Endothelial cell of umbilical vein (primary cell): ENCODE measurements at regions of chr1 and their contacts with region 1.

Region 1: GRCh38 chr1:43358746-43359693 is at the start of gene CDC20:
- DNase-seq: peak; percentile 98
- H3K4me3 ChIP-seq: peak within 1 kb of the TSS; percentile 57 to 84 (median 80)
- H3K27ac ChIP-seq: peak within 1 kb of the TSS; percentile 80
- H3K4me1 ChIP-seq: peaks cover 38% of the 10 kb centered on the region
- H3K27me3 ChIP-seq: no peaks in the 10 kb centered on the region
- CTCF ChIP-seq: no peak
- POLR2A ChIP-seq: no peak
- total RNA-seq, gene CDC20: 156 and 170 TPM in 2 replicates

Region 2: DNA sequence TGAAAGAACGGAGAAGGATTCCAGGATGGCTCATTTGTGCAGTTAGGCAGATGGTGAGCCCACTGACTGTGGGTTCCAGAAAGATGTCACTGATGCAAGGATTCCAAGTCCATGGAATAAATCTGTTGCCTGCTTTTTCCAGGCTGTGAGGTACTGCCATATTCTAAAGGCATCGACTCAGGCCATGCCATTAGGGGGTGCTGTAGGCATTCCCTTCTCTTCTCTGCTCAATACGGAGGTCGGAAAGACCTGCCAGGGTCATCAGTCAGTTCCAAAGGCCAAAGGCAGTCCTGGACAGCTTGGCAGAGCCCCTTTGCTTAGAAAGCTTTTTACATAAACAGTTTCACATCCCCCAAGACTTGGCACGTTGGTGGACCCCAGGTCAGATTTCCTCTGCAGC is 120.9 kb before region 1 on chr1:
- CTCF ChIA-PET with region 1: interaction called, 19 read pairs
- POLR2A ChIA-PET with region 1: no interaction called
- dilution Hi-C with region 1: no loop called
- intact Hi-C with region 1: loop called (anchors 2 kb)
- DNase-seq: peak; percentile 77
- H3K4me3 ChIP-seq: no peak overlapping the region
- H3K27ac ChIP-seq: no peak overlapping the region
- H3K4me1 ChIP-seq: peaks cover 6% of the 10 kb centered on the region
- H3K27me3 ChIP-seq: no peaks in the 10 kb centered on the region
- CTCF ChIP-seq: peak; percentile 81 to 86
- POLR2A ChIP-seq: no peak

Region 3: GRCh38 chr1:43329995-43330751 is 28.8 kb before region 1 on chr1:
- CTCF ChIA-PET with region 1: interaction called, 14 read pairs
- POLR2A ChIA-PET with region 1: no interaction called
- dilution Hi-C with region 1: no loop called
- intact Hi-C with region 1: no loop called
- DNase-seq: peak; percentile 89
- H3K4me3 ChIP-seq: no peak overlapping the region
- H3K27ac ChIP-seq: no peak overlapping the region
- H3K4me1 ChIP-seq: peaks cover 10% of the 10 kb centered on the region
- H3K27me3 ChIP-seq: no peaks in the 10 kb centered on the region
- CTCF ChIP-seq: no peak
- POLR2A ChIP-seq: peak; percentile 39

Region 4: GRCh38 chr1:43348809-43349583 is 10.0 kb before region 1 on chr1:
- CTCF ChIA-PET with region 1: interaction called, 5 read pairs
- POLR2A ChIA-PET with region 1: no interaction called
- dilution Hi-C with region 1: no loop called
- intact Hi-C with region 1: loop called (anchors 1 kb)
- DNase-seq: peak; percentile 53
- H3K4me3 ChIP-seq: peak overlapping the region; percentile 17 to 46 (median 33)
- H3K27ac ChIP-seq: no peak overlapping the region
- H3K4me1 ChIP-seq: peaks cover 3% of the 10 kb centered on the region
- H3K27me3 ChIP-seq: no peaks in the 10 kb centered on the region
- CTCF ChIP-seq: no peak
- POLR2A ChIP-seq: peak; percentile 64

Region 5: DNA sequence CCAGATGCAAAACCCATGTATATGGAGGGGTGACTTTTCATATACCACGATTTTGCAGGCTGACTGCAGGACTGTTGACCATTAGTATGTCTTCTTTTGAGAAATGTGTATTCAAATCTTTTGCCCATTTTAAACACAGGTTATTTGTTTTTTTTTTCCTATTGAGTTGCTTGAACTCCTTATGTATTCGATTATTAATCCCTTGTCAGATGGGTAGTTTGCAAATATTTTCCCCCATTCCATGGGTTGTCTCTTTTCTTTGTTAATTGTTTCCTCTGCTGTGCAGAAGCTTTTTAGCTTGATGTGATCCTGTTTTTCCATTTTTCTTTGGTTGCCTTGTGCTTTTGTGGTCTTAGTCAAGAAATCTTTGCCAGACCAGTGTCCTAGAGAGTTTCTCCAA is 735.0 kb after region 1 on chr1:
- CTCF ChIA-PET with region 1: no interaction called
- POLR2A ChIA-PET with region 1: no interaction called
- dilution Hi-C with region 1: no loop called
- intact Hi-C with region 1: no loop called
- DNase-seq: no peak
- H3K4me3 ChIP-seq: no peak overlapping the region
- H3K27ac ChIP-seq: no peak overlapping the region
- H3K4me1 ChIP-seq: no peaks in the 10 kb centered on the region
- H3K27me3 ChIP-seq: peaks cover 1 to 11% of the 10 kb centered on the region in 2 experiments
- CTCF ChIP-seq: no peak
- POLR2A ChIP-seq: no peak